ENCODE measurements at regions of chr16 and their contacts with region 1.

Region 1: GRCh38 chr16:1474796-1475551 is at the start of gene CLCN7:
- DNase-seq: peak; percentile 67
- ATAC-seq: peak; percentile 82
- H3K4me3 ChIP-seq: peak within 1 kb of the TSS; percentile 73 to 88 (median 80)
- H3K27ac ChIP-seq: peak within 1 kb of the TSS; percentile 83
- H3K4me1 ChIP-seq: peaks cover 52% of the 10 kb centered on the region
- H3K27me3 ChIP-seq: no peaks in the 10 kb centered on the region; a peak in 1 of 5 replicates
- CTCF ChIP-seq: no peak
- EP300 ChIP-seq: 0 out of 4 replicates have a peak, but pooled peaks of 1 of the 2 experiments have one; percentile 24
- POLR2A ChIP-seq: peak; percentile 55 to 91; a peak in 3 of 4 replicates
- RAD21 ChIP-seq: peak; percentile 42; the same call in 1 of the 2 replicates
- total RNA-seq, gene CLCN7: 9.8 and 25.1 TPM in 2 replicates

Region 2: DNA sequence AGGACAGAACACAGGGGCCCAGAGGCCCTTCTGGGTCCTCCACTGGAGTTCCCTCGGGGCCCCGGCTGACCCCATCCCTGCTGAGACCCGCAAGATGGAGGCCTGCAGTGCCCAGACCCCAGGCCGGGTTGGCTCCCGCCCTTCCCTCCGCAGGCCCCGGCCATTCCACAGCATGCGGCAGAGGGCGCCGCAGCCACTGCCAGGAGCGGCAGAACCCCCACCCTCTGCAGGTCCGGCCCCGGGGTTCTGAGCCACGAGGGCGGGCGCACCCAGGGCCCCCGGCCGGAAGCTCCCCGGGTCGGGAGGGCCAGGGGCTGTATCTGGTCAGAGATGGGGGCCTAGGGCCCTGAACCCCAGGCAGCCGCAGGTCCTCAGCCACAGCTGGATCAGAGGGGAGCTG is 46.5 kb before region 1 on chr16:
- CTCF ChIA-PET with region 1: no interaction called
- POLR2A ChIA-PET with region 1: interaction called, 3 read pairs
- in situ Hi-C with region 1: no loop called
- intact Hi-C with region 1: loop called (anchors 2 kb)
- DNase-seq: no peak
- ATAC-seq: peak; percentile 55
- H3K4me3 ChIP-seq: peak overlapping the region in 1 of 3 experiments; percentile 26; a peak in 1 of 6 replicates
- H3K27ac ChIP-seq: no peak overlapping the region
- H3K4me1 ChIP-seq: peaks cover 41% of the 10 kb centered on the region
- H3K27me3 ChIP-seq: peaks cover 10 to 39% of the 10 kb centered on the region in 2 experiments
- CTCF ChIP-seq: peak; percentile 78
- EP300 ChIP-seq: no peak
- POLR2A ChIP-seq: no peak
- RAD21 ChIP-seq: peak; percentile 68

Measured in HepG2 (cell line).